T-cell (primary cell): ENCODE measurements at regions of chr4 and their contacts with region 1.

Region 1: DNA sequence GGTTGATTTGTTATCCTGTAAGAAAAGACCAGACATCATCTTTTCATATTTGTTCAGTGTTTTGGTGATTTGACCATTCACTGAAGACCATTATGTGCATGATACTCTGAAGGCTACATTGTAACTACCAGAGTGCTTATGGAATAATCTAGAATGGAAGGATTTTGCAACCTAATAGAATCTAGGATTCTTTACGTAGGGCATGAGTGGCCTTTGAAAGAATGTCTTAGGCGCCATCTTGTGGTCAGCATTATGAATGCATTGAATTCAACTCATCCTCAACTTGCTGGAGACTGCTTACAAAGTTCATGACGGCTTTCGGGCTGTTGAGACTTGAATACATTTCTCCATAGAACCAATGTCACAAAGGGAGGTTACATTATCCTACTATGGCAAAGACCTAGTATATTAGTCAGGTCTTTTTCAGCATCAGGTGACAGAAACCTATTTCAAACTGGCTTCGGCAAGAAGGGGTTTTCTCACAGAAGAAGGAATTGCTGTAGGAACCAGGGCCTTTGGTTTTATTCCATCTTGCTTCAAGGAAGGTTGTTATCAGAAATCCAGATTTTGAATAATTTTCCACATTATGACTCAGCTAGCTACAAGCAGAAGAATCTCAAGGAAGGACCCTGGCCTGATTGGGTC is 104.1 kb downstream of the GPAT3 start:
- DNase-seq: peak in 28 of 35 experiments; percentile 9 to 83 (median 31)
- ATAC-seq: peak; percentile 52 to 69 (median 66)
- H3K4me3 ChIP-seq: no peak overlapping the region
- H3K4me3 Mint-ChIP-seq: no peak overlapping the region
- H3K27ac ChIP-seq: no peak overlapping the region
- H3K27ac Mint-ChIP-seq: no peak overlapping the region
- H3K4me1 ChIP-seq: no peaks in the 10 kb centered on the region
- H3K4me1 Mint-ChIP-seq: peaks cover 2 to 5% (median 2%) of the 10 kb centered on the region in 3 donors
- H3K27me3 ChIP-seq: peaks cover 0 to 7% of the 10 kb centered on the region in 2 experiments
- H3K27me3 Mint-ChIP-seq: peaks cover 9 to 10% of the 10 kb centered on the region in 2 donors

Region 2: GRCh38 chr4:83276299-83277040 is 363.5 kb before region 1 on chr4:
- CTCF ChIA-PET with region 1: interaction called in 1 of 2 experiments, 11 read pairs
- POLR2A ChIA-PET with region 1: no interaction called
- DNase-seq: no peak
- ATAC-seq: peak in 2 of 4 experiments; percentile 35 to 51
- H3K4me3 ChIP-seq: no peak overlapping the region
- H3K4me3 Mint-ChIP-seq: no peak overlapping the region
- H3K27ac ChIP-seq: no peak overlapping the region
- H3K27ac Mint-ChIP-seq: no peak overlapping the region
- H3K4me1 ChIP-seq: no peaks in the 10 kb centered on the region
- H3K4me1 Mint-ChIP-seq: peaks cover 16 to 31% (median 18%) of the 10 kb centered on the region in 3 donors
- H3K27me3 ChIP-seq: no peaks in the 10 kb centered on the region
- H3K27me3 Mint-ChIP-seq: no peaks in the 10 kb centered on the region

Region 3: DNA sequence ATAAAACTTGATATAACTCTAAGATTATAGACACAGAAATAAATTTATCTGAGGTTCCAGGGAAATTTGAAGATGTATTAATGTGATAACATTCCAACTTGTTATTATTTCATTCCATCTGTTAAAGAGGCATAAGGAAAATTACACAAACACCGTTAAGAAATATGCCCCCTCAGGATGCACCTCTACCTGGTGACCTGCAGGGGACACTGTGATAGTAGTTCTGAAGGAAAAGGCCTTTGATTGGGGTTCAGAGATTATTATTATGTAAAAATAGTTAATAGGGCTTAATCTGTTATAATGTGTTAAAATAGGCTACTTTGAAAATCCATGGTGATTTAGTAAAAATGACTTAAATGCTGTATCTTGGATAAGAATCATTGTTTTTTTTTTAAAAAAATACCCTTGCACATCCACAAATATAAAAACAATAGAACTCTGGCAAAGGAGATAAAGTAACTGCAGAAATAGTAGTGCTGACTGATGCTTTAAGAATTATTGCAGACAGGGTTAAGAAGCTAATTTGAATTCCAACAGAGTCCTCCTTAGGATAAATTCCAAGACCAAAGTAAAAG is 149.0 kb before region 1 on chr4:
- CTCF ChIA-PET with region 1: interaction called, 9 to 14 read pairs
- POLR2A ChIA-PET with region 1: no interaction called
- DNase-seq: peak in 5 of 35 experiments; percentile 6 to 64 (median 14)
- ATAC-seq: peak; percentile 65 to 82 (median 70)
- H3K4me3 ChIP-seq: no peak overlapping the region
- H3K4me3 Mint-ChIP-seq: no peak overlapping the region
- H3K27ac ChIP-seq: no peak overlapping the region
- H3K27ac Mint-ChIP-seq: no peak overlapping the region
- H3K4me1 ChIP-seq: peaks cover 0 to 1% of the 10 kb centered on the region in 2 experiments
- H3K4me1 Mint-ChIP-seq: peaks cover 5 to 8% (median 8%) of the 10 kb centered on the region in 3 donors
- H3K27me3 ChIP-seq: no peaks in the 10 kb centered on the region
- H3K27me3 Mint-ChIP-seq: no peaks in the 10 kb centered on the region

Region 4: DNA sequence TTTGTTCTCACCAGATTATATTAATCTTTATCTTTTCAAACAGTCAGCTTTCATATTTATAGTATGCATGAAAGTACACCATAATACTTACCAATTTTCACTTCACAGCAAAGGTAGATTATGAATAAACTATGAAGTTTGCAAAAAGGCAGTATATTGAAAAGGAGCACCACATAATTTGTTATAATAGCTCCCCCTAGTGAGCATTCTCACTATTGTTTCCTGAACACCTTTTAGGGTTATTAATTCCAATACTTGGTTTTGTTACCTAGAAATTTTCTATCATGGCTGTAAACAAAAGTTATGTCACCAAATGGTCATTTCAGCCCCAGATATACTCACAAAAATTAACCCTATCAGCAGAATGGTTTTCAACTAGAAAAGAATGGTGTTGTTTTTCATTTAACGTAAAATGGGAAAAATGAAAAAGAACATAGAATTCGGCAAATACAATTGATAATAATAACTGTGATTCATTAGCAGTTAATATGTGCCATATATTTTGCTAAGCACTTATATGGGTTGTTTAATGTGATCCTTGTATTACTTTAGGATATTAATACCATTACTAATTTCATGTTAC is 889.3 kb after region 1 on chr4:
- CTCF ChIA-PET with region 1: interaction called, 4 to 13 read pairs
- POLR2A ChIA-PET with region 1: no interaction called
- DNase-seq: peak in 1 of 35 experiments; percentile 27
- ATAC-seq: no peak
- H3K4me3 ChIP-seq: no peak overlapping the region
- H3K4me3 Mint-ChIP-seq: no peak overlapping the region
- H3K27ac ChIP-seq: no peak overlapping the region
- H3K27ac Mint-ChIP-seq: no peak overlapping the region
- H3K4me1 ChIP-seq: no peaks in the 10 kb centered on the region
- H3K4me1 Mint-ChIP-seq: no peaks in the 10 kb centered on the region
- H3K27me3 ChIP-seq: no peaks in the 10 kb centered on the region
- H3K27me3 Mint-ChIP-seq: peaks cover 13 to 33% of the 10 kb centered on the region in 2 donors